Esophagus muscularis mucosa (tissue), 4 donors: ENCODE measurements at regions of chr19 and their contacts with region 1.

Region 1: DNA sequence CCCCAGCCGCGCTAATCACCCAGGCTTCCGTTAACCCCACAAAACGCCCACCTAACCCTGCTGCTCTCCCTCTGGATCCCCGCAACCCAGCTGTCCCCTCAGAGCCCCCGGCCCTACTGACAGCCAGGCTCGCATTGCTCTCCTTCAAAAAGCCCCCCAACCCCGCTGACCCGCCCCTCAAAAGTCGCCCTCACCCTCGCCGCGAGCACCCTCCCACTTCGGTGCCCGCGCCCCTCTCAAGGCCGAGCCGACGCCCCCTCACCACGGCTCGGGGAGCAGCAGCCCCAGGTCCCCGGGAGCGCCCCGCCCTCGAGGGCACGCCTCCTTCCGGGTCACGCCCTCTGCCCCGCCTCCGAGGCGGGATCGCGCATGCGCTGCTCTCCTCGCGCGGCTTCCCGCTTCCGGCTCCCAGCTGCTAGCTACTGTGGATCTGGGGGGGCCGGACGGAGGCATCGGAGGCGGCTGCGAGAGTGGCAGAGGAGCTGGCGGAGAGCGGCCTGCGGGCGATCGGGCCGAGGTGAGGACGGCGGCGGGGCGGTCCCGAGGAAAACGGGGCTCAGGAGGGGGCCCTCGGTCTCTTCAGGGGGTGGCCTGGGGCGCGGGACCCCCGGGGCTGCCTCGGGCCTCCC is 46.1 kb downstream of the ARHGEF18 start:
- DNase-seq: peak; percentile 94
- H3K4me3 ChIP-seq: peak overlapping the region; percentile 73 to 100 (median 94)
- H3K27ac ChIP-seq: peak overlapping the region; percentile 76 to 88 (median 82)
- H3K4me1 ChIP-seq: peaks cover 13 to 45% (median 41%) of the 10 kb centered on the region in 4 donors
- H3K27me3 ChIP-seq: no peaks in the 10 kb centered on the region
- CTCF ChIP-seq: peak in 1 of 3 experiments; percentile 8
- EP300 ChIP-seq: no peak
- POLR2A ChIP-seq: no peak

Region 2: GRCh38 chr19:7515645-7516151 is 120.9 kb after region 1 on chr19 and contains the start of gene ZNF358:
- intact Hi-C with region 1: loop called (anchors 5 kb)
- DNase-seq: no peak
- H3K4me3 ChIP-seq: peak within 1 kb of the TSS; percentile 77 to 91 (median 81)
- H3K27ac ChIP-seq: peak within 1 kb of the TSS; percentile 88 to 93 (median 90)
- H3K4me1 ChIP-seq: peaks cover 21 to 38% (median 37%) of the 10 kb centered on the region in 4 donors
- H3K27me3 ChIP-seq: no peaks in the 10 kb centered on the region
- CTCF ChIP-seq: no peak
- EP300 ChIP-seq: no peak
- POLR2A ChIP-seq: no peak
- total RNA-seq, gene ZNF358: 95.4 to 168 (median 137) TPM